Naive thymus-derived CD4-positive, alpha-beta T cell (primary cell): ENCODE measurements at regions of chr1 and their contacts with region 1.

Region 1: DNA sequence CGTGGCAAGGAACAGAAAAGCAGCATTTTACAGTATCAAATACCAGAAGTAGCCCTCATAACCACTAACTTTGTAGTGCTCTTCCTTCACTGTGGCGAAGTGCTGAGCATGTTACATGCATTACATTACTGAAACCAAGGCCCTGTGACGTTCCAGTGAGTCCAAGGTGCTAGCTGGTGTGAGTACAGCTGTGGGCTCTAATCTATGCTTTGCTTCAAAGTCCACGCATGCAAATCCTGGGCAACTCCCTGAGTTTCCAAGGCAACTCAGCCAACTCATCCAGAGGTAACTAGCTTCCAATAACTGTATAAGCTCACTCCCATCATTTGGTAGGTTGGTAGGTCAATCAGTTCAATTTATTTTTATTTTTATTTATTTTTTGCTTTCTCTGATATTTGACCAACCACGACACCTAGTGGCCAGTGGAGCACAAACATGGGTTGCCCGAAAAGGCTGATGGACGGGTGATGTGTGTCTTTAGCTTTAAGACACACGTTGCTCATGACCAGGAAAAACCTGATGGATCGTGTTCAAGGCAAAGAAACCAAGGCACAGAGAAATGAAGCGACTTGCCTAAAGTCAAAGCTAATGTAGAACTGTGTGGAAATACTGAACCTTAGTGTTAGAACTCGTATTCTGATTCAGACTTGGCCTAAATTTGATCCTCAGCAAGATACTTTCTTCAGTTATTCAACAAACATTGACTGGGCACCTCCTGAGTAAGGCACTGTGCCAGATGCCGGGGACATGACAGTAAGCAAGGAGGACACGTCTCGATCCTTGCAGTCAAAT is 73.0 kb downstream of the GNG12 start:
- DNase-seq: peak; percentile 17 to 64 (median 45)
- ATAC-seq: peak; percentile 73
- H3K4me3 ChIP-seq: no peak overlapping the region
- H3K4me3 Mint-ChIP-seq: no peak overlapping the region
- H3K27ac ChIP-seq: no peak overlapping the region
- H3K27ac Mint-ChIP-seq: no peak overlapping the region
- H3K4me1 ChIP-seq: no peaks in the 10 kb centered on the region
- H3K4me1 Mint-ChIP-seq: no peaks in the 10 kb centered on the region
- H3K27me3 ChIP-seq: peaks cover 0 to 5% of the 10 kb centered on the region in 2 donors
- H3K27me3 Mint-ChIP-seq: peaks cover 18 to 33% (median 24%) of the 10 kb centered on the region in 5 donors

Region 2: GRCh38 chr1:67459068-67459467 is 301.2 kb before region 1 on chr1:
- CTCF ChIA-PET with region 1: no interaction called
- POLR2A ChIA-PET with region 1: no interaction called
- intact Hi-C with region 1: no loop called
- DNase-seq: no peak
- ATAC-seq: no peak
- H3K4me3 ChIP-seq: no peak overlapping the region
- H3K4me3 Mint-ChIP-seq: no peak overlapping the region
- H3K27ac ChIP-seq: no peak overlapping the region
- H3K27ac Mint-ChIP-seq: no peak overlapping the region
- H3K4me1 ChIP-seq: no peaks in the 10 kb centered on the region
- H3K4me1 Mint-ChIP-seq: no peaks in the 10 kb centered on the region
- H3K27me3 ChIP-seq: no peaks in the 10 kb centered on the region
- H3K27me3 Mint-ChIP-seq: peaks cover 0 to 6% (median 0%) of the 10 kb centered on the region in 5 donors

Region 3: DNA sequence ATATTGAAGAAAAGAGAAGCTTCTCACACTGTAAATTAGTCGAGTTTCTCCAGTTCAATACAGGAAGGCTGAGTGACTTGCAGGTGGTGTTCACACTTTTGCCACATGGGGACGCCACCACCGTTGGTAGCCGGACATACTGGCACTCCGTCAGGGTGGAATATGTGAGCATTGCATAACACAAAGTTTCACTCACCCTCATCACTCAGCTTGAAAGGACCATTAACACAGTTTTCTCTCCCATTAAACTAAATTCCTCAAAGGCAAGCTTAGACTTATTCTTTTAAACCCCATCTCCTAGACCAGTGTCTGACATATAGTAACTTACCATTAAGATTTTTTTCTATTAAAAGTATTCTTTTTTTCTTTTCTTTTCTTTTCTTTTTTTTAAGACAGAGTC is 224.8 kb before region 1 on chr1:
- CTCF ChIA-PET with region 1: interaction called, 11 read pairs
- POLR2A ChIA-PET with region 1: no interaction called
- intact Hi-C with region 1: loop called (anchors 1 kb)
- DNase-seq: peak in 4 of 9 donors; percentile 3 to 42 (median 10)
- ATAC-seq: peak; percentile 72
- H3K4me3 ChIP-seq: no peak overlapping the region
- H3K4me3 Mint-ChIP-seq: no peak overlapping the region
- H3K27ac ChIP-seq: no peak overlapping the region
- H3K27ac Mint-ChIP-seq: no peak overlapping the region
- H3K4me1 ChIP-seq: no peaks in the 10 kb centered on the region
- H3K4me1 Mint-ChIP-seq: no peaks in the 10 kb centered on the region
- H3K27me3 ChIP-seq: no peaks in the 10 kb centered on the region
- H3K27me3 Mint-ChIP-seq: peaks cover 0 to 10% (median 0%) of the 10 kb centered on the region in 5 donors

Region 4: DNA sequence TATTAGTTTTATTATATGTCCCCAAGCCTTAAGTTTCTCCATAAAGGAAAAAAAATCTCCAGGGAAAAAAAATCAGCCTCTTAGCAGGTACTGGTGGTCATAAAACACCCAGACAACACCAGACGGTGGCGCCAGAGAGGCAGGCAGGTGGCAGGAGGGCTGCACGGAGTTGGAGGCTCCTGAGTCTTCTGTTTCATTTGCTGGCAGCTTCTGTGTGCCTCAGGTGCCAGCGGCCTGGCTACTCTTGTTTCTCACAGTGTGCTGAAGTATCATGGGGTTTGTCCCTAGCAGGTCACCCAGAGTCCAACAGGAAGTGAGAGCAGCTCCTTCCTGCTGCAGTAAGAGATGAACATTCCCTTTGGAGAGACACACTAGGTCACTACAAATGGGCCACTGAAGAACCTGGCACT is 198.5 kb before region 1 on chr1:
- CTCF ChIA-PET with region 1: interaction called, 100 read pairs
- POLR2A ChIA-PET with region 1: no interaction called
- intact Hi-C with region 1: loop called (anchors 1 kb)
- DNase-seq: peak; percentile 51 to 84 (median 70)
- ATAC-seq: peak; percentile 80
- H3K4me3 ChIP-seq: no peak overlapping the region
- H3K4me3 Mint-ChIP-seq: no peak overlapping the region
- H3K27ac ChIP-seq: no peak overlapping the region
- H3K27ac Mint-ChIP-seq: no peak overlapping the region
- H3K4me1 ChIP-seq: no peaks in the 10 kb centered on the region
- H3K4me1 Mint-ChIP-seq: peaks cover 0 to 3% (median 0%) of the 10 kb centered on the region in 7 donors
- H3K27me3 ChIP-seq: no peaks in the 10 kb centered on the region
- H3K27me3 Mint-ChIP-seq: peaks cover 0 to 15% (median 5%) of the 10 kb centered on the region in 5 donors

Region 5: DNA sequence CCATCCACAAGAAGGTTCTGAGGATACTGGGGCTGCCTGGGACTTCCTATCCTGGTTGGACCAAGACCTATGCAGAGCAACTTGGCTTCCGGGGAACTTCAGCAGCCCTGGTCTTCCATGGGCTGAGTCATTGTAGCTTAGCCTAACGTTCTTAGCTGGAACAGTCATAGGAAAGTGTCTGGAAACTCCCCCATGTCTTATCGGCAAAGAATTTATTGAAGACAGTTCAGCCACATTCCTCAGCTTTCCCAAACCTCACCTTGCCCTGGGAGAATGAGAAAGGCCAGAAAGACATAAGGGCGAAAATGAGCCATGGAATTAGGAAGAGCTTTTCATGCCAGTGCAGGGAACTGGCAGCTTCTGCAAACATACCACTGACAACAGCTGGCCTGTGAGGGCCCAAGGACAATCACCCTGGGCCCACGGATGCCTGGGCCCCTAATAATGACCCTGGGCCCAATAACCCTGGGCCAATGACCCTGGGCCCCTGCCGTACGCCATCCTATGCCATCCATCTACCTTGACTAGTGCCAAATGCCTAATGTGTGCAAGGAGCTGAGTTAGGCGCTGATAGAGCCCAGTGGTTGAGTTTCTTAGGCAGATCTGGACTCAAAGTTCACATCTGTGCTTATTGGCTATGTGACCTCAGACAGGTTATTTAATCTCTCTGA is 189.6 kb before region 1 on chr1:
- CTCF ChIA-PET with region 1: interaction called, 10 read pairs
- POLR2A ChIA-PET with region 1: no interaction called
- intact Hi-C with region 1: no loop called
- DNase-seq: no peak
- ATAC-seq: no peak
- H3K4me3 ChIP-seq: no peak overlapping the region
- H3K4me3 Mint-ChIP-seq: no peak overlapping the region
- H3K27ac ChIP-seq: no peak overlapping the region
- H3K27ac Mint-ChIP-seq: no peak overlapping the region
- H3K4me1 ChIP-seq: no peaks in the 10 kb centered on the region
- H3K4me1 Mint-ChIP-seq: no peaks in the 10 kb centered on the region
- H3K27me3 ChIP-seq: no peaks in the 10 kb centered on the region
- H3K27me3 Mint-ChIP-seq: no peaks in the 10 kb centered on the region

Region 6: DNA sequence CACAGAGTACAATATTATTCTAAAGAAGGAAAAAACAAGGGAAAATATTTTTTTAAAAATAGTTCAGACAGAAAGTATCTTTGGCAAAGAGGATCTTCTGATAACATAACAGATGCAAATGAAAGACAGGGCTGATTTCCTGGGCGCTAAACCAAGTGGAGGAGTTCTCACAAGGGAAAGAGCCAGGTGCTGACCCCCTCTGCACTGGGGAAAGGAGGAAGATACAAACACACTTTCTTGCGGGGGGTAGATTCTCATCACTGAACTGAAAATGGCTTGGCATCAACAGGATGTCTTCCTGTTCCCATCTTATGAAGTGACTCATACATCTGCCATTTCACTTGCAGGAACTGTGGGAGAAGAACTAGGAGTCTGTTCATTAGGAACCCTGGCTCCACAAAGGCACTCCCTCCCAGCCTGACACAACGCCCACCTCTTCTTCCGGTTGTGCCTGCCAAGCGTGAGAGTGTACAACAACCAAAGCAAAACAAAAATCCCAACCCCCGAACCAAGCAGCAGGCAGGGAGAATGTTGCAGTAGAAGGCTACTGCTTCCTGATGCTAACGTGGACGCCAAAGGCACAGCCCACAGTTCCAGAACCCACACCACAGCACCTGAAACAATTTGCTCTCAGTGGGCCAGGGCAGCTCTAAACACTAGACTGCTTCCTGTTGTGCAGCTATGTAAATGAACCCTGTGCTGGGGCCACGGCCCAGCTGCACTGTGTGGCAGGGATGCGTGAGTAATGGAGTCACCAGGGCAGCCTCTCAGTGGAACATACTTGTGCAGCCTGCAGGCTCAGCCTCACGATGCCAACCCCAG is 24.2 kb before region 1 on chr1:
- CTCF ChIA-PET with region 1: interaction called, 10 read pairs
- POLR2A ChIA-PET with region 1: no interaction called
- intact Hi-C with region 1: no loop called
- DNase-seq: peak in 8 of 9 donors; percentile 7 to 42 (median 30)
- ATAC-seq: peak; percentile 84
- H3K4me3 ChIP-seq: peak overlapping the region; percentile 35
- H3K4me3 Mint-ChIP-seq: peak overlapping the region; percentile 57 to 90 (median 78)
- H3K27ac ChIP-seq: peak overlapping the region; percentile 22
- H3K27ac Mint-ChIP-seq: peak overlapping the region; percentile 67 to 94 (median 90)
- H3K4me1 ChIP-seq: peaks cover 7 to 11% of the 10 kb centered on the region in 2 donors
- H3K4me1 Mint-ChIP-seq: peaks cover 14 to 26% (median 23%) of the 10 kb centered on the region in 7 donors
- H3K27me3 ChIP-seq: no peaks in the 10 kb centered on the region
- H3K27me3 Mint-ChIP-seq: peaks cover 0 to 5% (median 0%) of the 10 kb centered on the region in 5 donors

Region 7: GRCh38 chr1:67749844-67750689 is 10.2 kb before region 1 on chr1:
- CTCF ChIA-PET with region 1: interaction called, 10 read pairs
- POLR2A ChIA-PET with region 1: interaction called, 3 read pairs
- intact Hi-C with region 1: no loop called
- DNase-seq: no peak
- ATAC-seq: no peak
- H3K4me3 ChIP-seq: no peak overlapping the region
- H3K4me3 Mint-ChIP-seq: no peak overlapping the region
- H3K27ac ChIP-seq: no peak overlapping the region
- H3K27ac Mint-ChIP-seq: no peak overlapping the region
- H3K4me1 ChIP-seq: no peaks in the 10 kb centered on the region
- H3K4me1 Mint-ChIP-seq: peaks cover 0 to 35% (median 3%) of the 10 kb centered on the region in 7 donors
- H3K27me3 ChIP-seq: no peaks in the 10 kb centered on the region
- H3K27me3 Mint-ChIP-seq: peaks cover under 1 to 26% (median 18%) of the 10 kb centered on the region in 5 donors